PC-9 (cell line): ENCODE measurements at regions of chr3 and their contacts with region 1.

Region 1: DNA sequence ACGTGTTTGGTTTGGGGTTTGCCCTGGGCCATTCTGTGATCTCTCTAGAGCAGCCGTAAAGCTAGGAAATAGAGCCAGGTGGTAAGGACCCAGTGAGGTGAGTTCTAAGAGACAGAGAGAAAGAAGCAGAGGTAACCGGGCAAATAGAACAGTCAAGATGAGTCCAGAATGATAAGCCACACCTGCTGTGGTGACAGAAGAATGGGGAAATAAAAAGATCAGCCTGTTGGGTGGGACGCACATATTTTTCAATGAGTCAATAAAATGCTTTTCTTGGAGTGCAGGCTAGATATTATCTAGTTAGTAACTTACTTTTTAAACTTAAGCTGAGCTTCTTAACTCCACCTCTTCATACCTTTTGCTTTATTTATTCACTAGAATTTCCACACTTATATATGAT is 135.0 kb downstream of the NFKBIZ start:
- DNase-seq: peak; percentile 67 to 91
- H3K4me3 ChIP-seq: no peak overlapping the region
- H3K27ac ChIP-seq: peak overlapping the region; percentile 1; the same call in 1 of the 2 replicates
- H3K4me1 ChIP-seq: peaks cover 12% of the 10 kb centered on the region
- H3K27me3 ChIP-seq: no peaks in the 10 kb centered on the region
- CTCF ChIP-seq: no peak

Region 2: GRCh38 chr3:101809178-101810021 is 175.0 kb before region 1 on chr3:
- CTCF ChIA-PET with region 1: no interaction called
- POLR2A ChIA-PET with region 1: no interaction called
- intact Hi-C with region 1: loop called (anchors 2 kb)
- DNase-seq: peak in 1 of 2 experiments; percentile 28
- H3K4me3 ChIP-seq: no peak overlapping the region
- H3K27ac ChIP-seq: no peak overlapping the region
- H3K4me1 ChIP-seq: peaks cover 10% of the 10 kb centered on the region
- H3K27me3 ChIP-seq: no peaks in the 10 kb centered on the region
- CTCF ChIP-seq: peak; percentile 94

Region 3: GRCh38 chr3:101928890-101929289 is 55.5 kb before region 1 on chr3:
- CTCF ChIA-PET with region 1: no interaction called
- POLR2A ChIA-PET with region 1: interaction called, 6 read pairs
- intact Hi-C with region 1: loop called (anchors 2 kb)
- DNase-seq: peak; percentile 60 to 69
- H3K4me3 ChIP-seq: no peak overlapping the region
- H3K27ac ChIP-seq: no peak overlapping the region
- H3K4me1 ChIP-seq: peaks cover 21% of the 10 kb centered on the region
- H3K27me3 ChIP-seq: no peaks in the 10 kb centered on the region
- CTCF ChIP-seq: no peak

Region 4: DNA sequence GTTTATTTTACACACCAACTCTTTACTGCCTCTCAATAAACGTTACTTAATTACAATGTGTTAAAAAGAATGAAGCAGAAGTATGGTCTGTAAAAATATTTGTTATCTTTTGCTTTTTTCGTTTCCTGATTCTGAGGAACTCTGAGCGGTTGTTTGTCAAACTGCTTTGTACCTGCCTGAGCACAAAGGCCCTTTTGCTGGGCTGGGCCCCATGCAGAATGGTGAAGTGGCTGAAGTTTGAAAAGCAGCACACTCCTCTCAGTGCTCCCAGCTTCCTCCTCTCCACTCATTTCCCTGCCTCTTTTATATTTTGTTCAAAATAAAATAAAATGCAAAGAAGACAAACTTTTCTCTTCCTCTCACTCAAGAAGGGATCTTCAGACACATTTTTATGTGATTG is 94.5 kb after region 1 on chr3:
- CTCF ChIA-PET with region 1: no interaction called
- POLR2A ChIA-PET with region 1: no interaction called
- intact Hi-C with region 1: loop called (anchors 2 kb)
- DNase-seq: peak in 1 of 2 experiments; percentile 27
- H3K4me3 ChIP-seq: 0 out of 2 replicates have a peak overlapping the region, but pooled peaks have one; percentile 3
- H3K27ac ChIP-seq: peak overlapping the region; percentile 39
- H3K4me1 ChIP-seq: peaks cover 20% of the 10 kb centered on the region
- H3K27me3 ChIP-seq: no peaks in the 10 kb centered on the region
- CTCF ChIP-seq: no peak

Region 5: DNA sequence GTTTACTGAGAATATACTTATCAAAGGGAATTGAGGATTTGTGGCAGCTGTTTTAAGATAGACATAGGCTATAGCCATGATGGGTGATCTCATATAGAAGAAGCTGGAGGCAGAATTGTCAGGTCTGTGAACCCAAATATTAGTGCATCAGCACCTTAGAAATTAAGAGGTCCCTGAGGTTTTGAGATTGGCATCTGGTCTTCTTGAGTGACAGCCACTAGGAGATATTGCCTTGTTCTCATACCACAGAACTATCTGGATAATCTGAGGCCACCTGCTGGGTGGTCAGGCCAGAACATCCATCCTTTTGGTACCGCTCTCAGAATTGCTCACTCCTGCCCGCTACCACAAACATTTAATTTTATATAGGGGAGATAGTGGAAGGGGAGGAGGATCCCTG is 239.8 kb after region 1 on chr3:
- CTCF ChIA-PET with region 1: interaction called, 4 read pairs
- POLR2A ChIA-PET with region 1: no interaction called
- intact Hi-C with region 1: loop called (anchors 1 kb)
- DNase-seq: peak in 1 of 2 experiments; percentile 43
- H3K4me3 ChIP-seq: no peak overlapping the region
- H3K27ac ChIP-seq: no peak overlapping the region
- H3K4me1 ChIP-seq: no peaks in the 10 kb centered on the region
- H3K27me3 ChIP-seq: no peaks in the 10 kb centered on the region
- CTCF ChIP-seq: peak; percentile 61